Activated naive CD4-positive, alpha-beta T cell treated with anti-CD3 and anti-CD28 coated beads for 36 hours (primary cell): ENCODE measurements at regions of chr5 and their contacts with region 1.

Region 1: DNA sequence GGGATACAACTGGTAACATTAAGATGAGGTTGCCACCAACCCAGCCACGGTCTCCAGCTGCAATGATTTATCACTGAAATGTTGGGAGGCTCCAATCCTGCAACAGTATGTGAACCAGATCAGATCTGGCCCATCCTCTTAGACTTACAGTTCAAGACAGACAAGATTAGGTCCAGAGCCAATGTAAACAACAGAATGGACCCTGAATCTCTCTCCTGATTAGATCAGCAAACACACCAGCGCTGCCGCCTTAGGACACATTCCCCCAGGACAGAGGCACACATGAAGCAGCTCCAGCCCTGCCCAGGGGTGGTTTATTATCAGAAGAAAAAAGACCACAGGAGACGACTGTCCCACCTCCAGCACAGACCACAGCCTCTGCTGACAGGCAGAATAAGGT is 82.1 kb downstream of the SLIT3 start:
- DNase-seq: no peak
- H3K4me3 Mint-ChIP-seq: no peak overlapping the region
- H3K27ac Mint-ChIP-seq: no peak overlapping the region
- H3K4me1 Mint-ChIP-seq: no peaks in the 10 kb centered on the region
- H3K27me3 Mint-ChIP-seq: no peaks in the 10 kb centered on the region

Region 2: GRCh38 chr5:167723254-167723871 is 1495.5 kb before region 1 on chr5:
- CTCF ChIA-PET with region 1: no interaction called
- intact Hi-C with region 1: no loop called
- DNase-seq: peak; percentile 78
- H3K4me3 Mint-ChIP-seq: no peak overlapping the region
- H3K27ac Mint-ChIP-seq: no peak overlapping the region
- H3K4me1 Mint-ChIP-seq: peaks cover 4% of the 10 kb centered on the region
- H3K27me3 Mint-ChIP-seq: peaks cover 14% of the 10 kb centered on the region

Region 3: DNA sequence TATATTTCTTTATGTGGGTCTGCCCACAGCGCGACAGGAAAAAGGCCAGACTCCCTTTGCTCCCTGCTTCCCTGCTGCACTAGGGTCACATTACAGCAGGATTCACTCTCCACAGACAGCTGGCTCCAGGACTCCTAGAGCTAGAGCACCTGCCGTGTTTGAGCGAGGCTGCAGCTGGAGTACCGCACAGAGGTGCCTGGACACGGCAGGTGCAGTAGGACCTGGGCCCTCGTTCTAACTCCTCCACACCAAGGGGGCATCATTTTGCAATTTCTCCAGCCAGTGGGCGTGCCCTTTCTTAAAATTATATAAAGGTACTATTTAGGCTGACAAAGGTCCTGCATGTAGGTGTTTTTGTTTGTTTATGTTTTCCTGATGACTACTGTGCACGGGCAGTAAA is 764.4 kb before region 1 on chr5:
- CTCF ChIA-PET with region 1: no interaction called
- intact Hi-C with region 1: no loop called
- DNase-seq: no peak
- H3K4me3 Mint-ChIP-seq: no peak overlapping the region
- H3K27ac Mint-ChIP-seq: no peak overlapping the region
- H3K4me1 Mint-ChIP-seq: no peaks in the 10 kb centered on the region
- H3K27me3 Mint-ChIP-seq: no peaks in the 10 kb centered on the region

Region 4: GRCh38 chr5:169183576-169183975 is 35.3 kb before region 1 on chr5:
- CTCF ChIA-PET with region 1: no interaction called
- intact Hi-C with region 1: loop called (anchors 1 kb)
- DNase-seq: no peak
- H3K4me3 Mint-ChIP-seq: no peak overlapping the region
- H3K27ac Mint-ChIP-seq: no peak overlapping the region
- H3K4me1 Mint-ChIP-seq: no peaks in the 10 kb centered on the region
- H3K27me3 Mint-ChIP-seq: no peaks in the 10 kb centered on the region

Region 5: GRCh38 chr5:169339869-169340268 is 121.0 kb after region 1 on chr5:
- CTCF ChIA-PET with region 1: no interaction called
- intact Hi-C with region 1: no loop called
- DNase-seq: no peak
- H3K4me3 Mint-ChIP-seq: no peak overlapping the region
- H3K27ac Mint-ChIP-seq: no peak overlapping the region
- H3K4me1 Mint-ChIP-seq: no peaks in the 10 kb centered on the region
- H3K27me3 Mint-ChIP-seq: peaks cover 6% of the 10 kb centered on the region